ENCODE measurements at regions of chr2 and their contacts with region 1.

Region 1: GRCh38 chr2:196592912-196593881 is 46.3 kb upstream of the CCDC150 start:
- DNase-seq: peak; percentile 35
- H3K4me3 ChIP-seq: peak within 1 kb of the TSS; percentile 54 to 58 (median 56)
- H3K27ac ChIP-seq: no peak within 1 kb of the TSS
- H3K4me1 ChIP-seq: peaks cover 10% of the 10 kb centered on the region
- H3K27me3 ChIP-seq: peaks cover 15% of the 10 kb centered on the region
- CTCF ChIP-seq: no peak

Region 2: DNA sequence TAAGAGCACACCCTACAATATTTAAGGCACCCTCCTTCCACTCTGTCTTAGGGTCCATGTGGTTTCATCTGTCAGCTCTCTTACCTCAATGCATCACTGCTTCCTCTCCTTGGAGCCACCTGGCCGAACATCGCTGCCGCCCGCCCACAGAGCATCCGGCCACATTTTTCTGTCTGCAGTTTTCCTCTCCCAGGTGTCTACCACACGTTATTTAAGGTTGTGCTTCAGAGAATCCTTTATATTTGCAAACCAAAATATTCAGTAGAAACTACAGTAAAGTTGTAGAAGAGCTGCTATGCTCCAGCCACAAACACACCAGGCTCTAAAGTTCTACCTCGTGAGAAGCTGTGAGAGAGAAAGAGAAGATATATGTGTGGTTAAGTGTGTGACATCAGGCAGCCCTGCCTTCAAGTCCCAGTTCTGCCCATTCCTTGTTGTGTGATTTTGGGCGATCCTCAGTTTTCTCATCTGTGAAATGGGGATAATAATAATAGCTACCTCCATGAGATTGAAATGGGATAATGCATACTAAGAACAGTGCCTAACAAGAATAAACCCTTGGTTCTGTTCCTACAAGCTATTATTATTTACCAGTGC is 417.0 kb before region 1 on chr2:
- CTCF ChIA-PET with region 1: no interaction called
- dilution Hi-C with region 1: no loop called
- in situ Hi-C with region 1: no loop called
- intact Hi-C with region 1: no loop called
- DNase-seq: no peak
- H3K4me3 ChIP-seq: no peak overlapping the region
- H3K27ac ChIP-seq: no peak overlapping the region
- H3K4me1 ChIP-seq: peaks cover 10% of the 10 kb centered on the region
- H3K27me3 ChIP-seq: no peaks in the 10 kb centered on the region
- CTCF ChIP-seq: no peak

Region 3: DNA sequence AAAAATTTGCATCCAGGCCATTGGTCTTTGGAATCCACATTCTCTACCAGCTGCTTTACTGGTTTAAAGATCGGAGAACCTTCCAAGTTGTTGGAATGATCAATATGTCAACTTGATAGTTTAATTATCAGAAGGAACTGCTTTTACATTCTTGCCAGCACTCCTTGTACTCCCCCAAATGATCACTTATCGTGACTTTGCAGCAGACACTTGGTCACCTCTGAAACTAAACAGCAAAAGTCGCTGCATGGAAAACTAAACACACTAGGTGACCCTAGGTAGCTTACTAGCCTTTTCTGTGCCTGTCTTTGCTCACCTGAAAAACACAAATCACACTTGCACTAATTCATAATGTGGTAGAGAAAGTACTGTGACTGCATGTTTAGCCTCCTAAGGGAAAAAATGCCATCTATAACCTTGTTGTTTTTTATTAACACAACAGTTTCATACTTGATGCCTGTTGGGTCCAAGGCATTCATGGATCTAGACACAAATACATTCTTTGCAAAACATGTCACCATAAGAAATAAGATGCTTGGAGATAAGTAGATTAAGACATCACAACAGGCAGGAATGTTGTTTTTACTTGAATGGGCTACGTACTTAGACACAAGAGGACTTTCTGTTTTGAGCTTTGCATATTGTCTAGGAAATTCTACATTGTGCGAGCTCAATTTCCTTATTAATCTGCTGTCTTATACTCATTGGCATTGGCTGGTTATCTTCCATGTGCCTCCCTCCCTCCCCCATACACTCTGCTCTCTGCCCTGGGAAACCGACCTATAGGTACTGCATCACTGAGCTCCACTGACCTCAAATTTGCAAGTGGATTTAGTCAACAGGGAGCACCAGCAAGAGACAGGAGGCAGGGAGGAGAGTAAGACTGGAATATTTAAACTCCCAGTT is 202.7 kb before region 1 on chr2:
- CTCF ChIA-PET with region 1: no interaction called
- dilution Hi-C with region 1: no loop called
- in situ Hi-C with region 1: no loop called
- intact Hi-C with region 1: no loop called
- DNase-seq: no peak
- H3K4me3 ChIP-seq: no peak overlapping the region
- H3K27ac ChIP-seq: no peak overlapping the region
- H3K4me1 ChIP-seq: no peaks in the 10 kb centered on the region
- H3K27me3 ChIP-seq: no peaks in the 10 kb centered on the region
- CTCF ChIP-seq: no peak

Region 4: DNA sequence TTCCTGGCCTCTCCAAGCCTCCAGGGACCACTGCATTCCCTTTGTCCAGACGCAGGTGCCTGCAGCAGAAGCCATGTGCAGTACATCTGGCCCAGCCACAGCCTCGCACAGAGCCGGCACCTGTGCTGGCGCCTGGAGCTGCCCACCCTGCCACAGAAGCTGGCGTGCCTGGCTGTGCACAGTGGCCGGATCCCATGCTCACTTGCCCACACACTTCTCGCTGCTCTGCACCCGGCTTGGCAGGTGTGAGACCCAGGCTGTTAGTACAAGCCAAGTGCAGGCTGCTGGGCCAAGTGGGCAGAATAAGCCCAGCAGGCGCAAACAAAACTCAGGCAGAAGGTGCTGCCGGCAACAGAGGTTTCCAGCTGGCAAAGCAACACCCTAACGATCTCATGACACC is 78.1 kb before region 1 on chr2:
- CTCF ChIA-PET with region 1: no interaction called
- dilution Hi-C with region 1: no loop called
- in situ Hi-C with region 1: no loop called
- intact Hi-C with region 1: no loop called
- DNase-seq: no peak
- H3K4me3 ChIP-seq: no peak overlapping the region
- H3K27ac ChIP-seq: no peak overlapping the region
- H3K4me1 ChIP-seq: no peaks in the 10 kb centered on the region
- H3K27me3 ChIP-seq: no peaks in the 10 kb centered on the region
- CTCF ChIP-seq: no peak

Region 5: DNA sequence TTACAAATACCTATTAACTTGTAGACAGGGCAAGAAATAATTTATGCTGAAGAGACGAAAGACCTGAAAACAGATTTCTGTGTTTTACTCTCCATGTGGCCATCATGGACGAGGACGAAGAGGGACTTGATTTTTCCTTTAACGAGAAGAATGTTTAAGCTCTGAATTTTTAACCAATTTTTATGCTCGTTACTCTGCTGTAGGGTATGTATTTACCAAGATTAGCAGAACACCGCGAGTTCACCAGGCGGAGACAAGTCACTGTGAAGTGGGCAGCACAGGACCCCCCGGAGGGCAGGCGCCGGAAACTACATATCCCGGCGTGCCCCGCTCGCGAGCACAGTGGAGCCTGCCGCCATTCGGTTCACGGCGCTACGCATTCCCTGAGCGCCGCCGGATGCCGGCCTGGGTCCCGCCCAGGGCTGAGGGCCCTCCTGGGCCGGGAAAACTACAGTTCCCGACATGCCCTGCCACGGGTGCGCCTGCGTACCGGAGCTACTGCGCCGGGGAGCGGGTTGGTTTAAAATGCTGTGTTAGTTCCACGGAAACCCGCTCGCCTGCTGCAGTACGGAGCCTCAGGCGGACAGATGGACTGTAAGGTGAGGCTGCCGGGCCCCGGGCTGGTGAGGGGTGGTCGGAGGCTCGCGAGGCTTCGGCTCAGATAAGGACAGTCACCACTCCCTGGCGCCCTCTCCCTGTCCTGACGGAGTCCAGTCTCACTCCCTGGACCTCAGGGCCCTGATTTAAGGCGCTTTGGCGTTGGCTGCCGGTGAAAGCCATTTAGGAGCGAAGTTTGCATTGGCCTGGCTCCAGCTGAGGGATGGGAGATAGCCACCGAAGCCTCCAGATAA is 46.2 kb after region 1 on chr2 and contains the start of gene CCDC150:
- CTCF ChIA-PET with region 1: no interaction called
- dilution Hi-C with region 1: no loop called
- in situ Hi-C with region 1: no loop called
- intact Hi-C with region 1: loop called (anchors 1 kb)
- DNase-seq: peak; percentile 92
- H3K4me3 ChIP-seq: peak within 1 kb of the TSS; percentile 82 to 93 (median 87)
- H3K27ac ChIP-seq: peak within 1 kb of the TSS; percentile 60
- H3K4me1 ChIP-seq: peaks cover 11% of the 10 kb centered on the region
- H3K27me3 ChIP-seq: no peaks in the 10 kb centered on the region
- CTCF ChIP-seq: peak in 1 of 2 donors; percentile 48
- total RNA-seq, gene CCDC150: 2.2 to 7.2 TPM